Calu3 (cell line): ENCODE measurements at regions of chr18 and their contacts with region 1.

Region 1: GRCh38 chr18:69843015-69843414 is 104.7 kb downstream of the CD226 start:
- DNase-seq: no peak
- H3K4me3 Mint-ChIP-seq: no peak overlapping the region
- H3K27ac Mint-ChIP-seq: no peak overlapping the region
- H3K4me1 Mint-ChIP-seq: no peaks in the 10 kb centered on the region
- H3K27me3 Mint-ChIP-seq: no peaks in the 10 kb centered on the region
- CTCF ChIP-seq: no peak

Region 2: DNA sequence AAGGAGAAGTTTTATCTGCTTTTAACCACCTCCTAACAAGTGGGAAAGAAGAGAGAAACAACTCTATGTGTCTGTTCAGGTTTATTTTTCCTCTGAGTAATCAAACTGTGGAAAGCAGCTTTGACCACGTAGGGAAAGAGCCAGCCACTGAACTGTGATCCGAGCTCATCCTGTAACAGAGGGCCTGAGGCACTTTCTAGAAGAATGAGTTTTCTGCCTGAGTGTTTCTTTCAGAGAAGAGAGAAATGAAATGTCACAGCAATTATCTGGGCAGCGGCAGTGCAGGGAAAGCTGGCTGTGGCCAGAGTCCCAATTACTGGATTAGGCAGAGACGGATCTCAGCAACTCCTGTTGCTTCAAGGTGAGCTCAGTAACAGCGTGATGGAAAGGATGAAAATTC is 47.2 kb before region 1 on chr18:
- CTCF ChIA-PET with region 1: no interaction called
- intact Hi-C with region 1: loop called (anchors 1 kb)
- DNase-seq: no peak
- H3K4me3 Mint-ChIP-seq: no peak overlapping the region
- H3K27ac Mint-ChIP-seq: no peak overlapping the region
- H3K4me1 Mint-ChIP-seq: no peaks in the 10 kb centered on the region
- H3K27me3 Mint-ChIP-seq: no peaks in the 10 kb centered on the region
- CTCF ChIP-seq: no peak

Region 3: GRCh38 chr18:69874058-69874457 is 31.0 kb after region 1 on chr18:
- CTCF ChIA-PET with region 1: no interaction called
- intact Hi-C with region 1: no loop called
- DNase-seq: no peak
- H3K4me3 Mint-ChIP-seq: no peak overlapping the region
- H3K27ac Mint-ChIP-seq: no peak overlapping the region
- H3K4me1 Mint-ChIP-seq: no peaks in the 10 kb centered on the region
- H3K27me3 Mint-ChIP-seq: no peaks in the 10 kb centered on the region
- CTCF ChIP-seq: no peak